Gastrocnemius medialis (tissue), 4 donors: ENCODE measurements at regions of chr15 and their contacts with region 1.

Region 1: GRCh38 chr15:74768771-74769342 is 13.0 kb upstream of the CSK start:
- DNase-seq: peak in 1 of 2 donors; percentile 48
- ATAC-seq: peak; percentile 66 to 71
- H3K4me3 ChIP-seq: peak overlapping the region in 1 of 4 donors; percentile 19
- H3K27ac ChIP-seq: no peak overlapping the region
- H3K4me1 ChIP-seq: no peaks in the 10 kb centered on the region
- H3K27me3 ChIP-seq: no peaks in the 10 kb centered on the region
- CTCF ChIP-seq: peak; percentile 82 to 91 (median 86)
- POLR2A ChIP-seq: no peak

Region 2: GRCh38 chr15:74373731-74374647 is 394.9 kb before region 1 on chr15:
- in situ Hi-C with region 1: loop called in 2 of 4 experiments (anchors 25 kb)
- intact Hi-C with region 1: loop called (anchors 2 kb)
- DNase-seq: peak; percentile 83 to 91
- ATAC-seq: peak; percentile 92 to 93
- H3K4me3 ChIP-seq: peak overlapping the region; percentile 63 to 90 (median 72)
- H3K27ac ChIP-seq: no peak overlapping the region
- H3K4me1 ChIP-seq: peaks cover 10 to 15% of the 10 kb centered on the region in 2 donors
- H3K27me3 ChIP-seq: no peaks in the 10 kb centered on the region
- CTCF ChIP-seq: peak; percentile 59 to 92 (median 87)
- POLR2A ChIP-seq: no peak

Region 3: DNA sequence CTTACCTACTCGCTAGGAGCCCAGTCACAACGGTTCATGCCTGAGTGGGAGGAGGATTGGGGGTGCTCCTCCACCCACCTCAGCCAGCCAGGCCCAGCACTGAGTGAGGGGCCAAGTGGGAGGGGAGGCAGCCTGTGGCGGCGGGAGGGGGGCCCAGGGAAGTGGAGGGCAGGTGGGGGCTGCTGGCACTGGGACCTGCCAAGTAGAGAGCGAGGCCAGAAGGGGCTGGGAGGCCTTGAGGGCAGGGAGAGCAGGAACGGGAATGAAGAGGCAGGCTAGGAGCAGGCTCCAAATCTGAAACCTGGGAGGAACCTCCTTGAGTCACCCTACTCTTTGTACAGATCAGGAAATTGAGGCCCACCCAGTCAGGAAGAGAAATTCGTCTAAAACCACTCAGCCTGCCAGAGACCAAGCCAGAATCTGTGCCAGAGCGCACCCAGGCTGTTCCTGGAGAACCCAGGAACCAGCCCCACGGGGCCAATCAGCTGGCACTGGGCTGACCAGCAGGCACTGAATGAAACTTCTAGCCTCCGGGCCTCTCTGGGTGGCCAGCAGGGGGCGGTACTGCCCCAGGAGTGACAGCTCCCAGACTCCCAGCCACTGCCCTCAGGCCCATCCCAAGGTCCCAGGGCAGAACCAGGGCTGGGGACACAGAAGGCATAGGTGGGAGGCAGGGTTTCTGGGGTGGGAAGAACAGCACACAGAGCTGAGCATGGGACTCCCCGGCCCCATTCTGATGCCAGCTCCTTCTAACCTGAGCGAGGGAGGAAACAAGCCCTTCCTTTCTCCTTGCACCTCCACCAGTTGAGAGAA is 386.6 kb before region 1 on chr15:
- in situ Hi-C with region 1: loop called in 2 of 4 experiments (anchors 25 kb)
- intact Hi-C with region 1: no loop called
- DNase-seq: peak; percentile 59 to 79
- ATAC-seq: peak; percentile 80 to 92
- H3K4me3 ChIP-seq: no peak overlapping the region
- H3K27ac ChIP-seq: no peak overlapping the region
- H3K4me1 ChIP-seq: peaks cover 12 to 13% of the 10 kb centered on the region in 2 donors
- H3K27me3 ChIP-seq: no peaks in the 10 kb centered on the region
- CTCF ChIP-seq: peak; percentile 88 to 96 (median 94)
- POLR2A ChIP-seq: no peak

Region 4: DNA sequence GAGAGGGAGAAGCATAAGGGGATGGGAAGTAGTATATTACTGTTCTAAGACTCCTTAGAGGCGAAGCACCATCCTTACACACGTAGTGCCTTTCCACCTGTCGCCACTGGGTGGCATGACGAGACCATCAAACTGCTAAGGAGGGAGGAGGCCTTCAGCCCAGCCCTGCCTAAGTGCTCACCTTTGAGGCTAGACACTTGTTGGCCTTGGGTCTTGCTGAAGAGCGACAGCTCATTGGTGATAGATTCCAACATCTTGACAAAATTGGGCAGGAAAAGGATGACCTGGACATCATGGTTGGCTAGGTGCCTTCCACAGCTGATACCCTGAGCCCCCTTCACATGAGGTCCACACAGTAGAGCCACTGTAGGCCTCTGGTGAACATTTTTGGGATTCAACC is 133.6 kb before region 1 on chr15:
- in situ Hi-C with region 1: loop called (anchors 5 to 10 kb)
- intact Hi-C with region 1: loop called (anchors 1 kb)
- DNase-seq: peak in 1 of 2 donors; percentile 51
- ATAC-seq: peak; percentile 64 to 73
- H3K4me3 ChIP-seq: no peak overlapping the region
- H3K27ac ChIP-seq: no peak overlapping the region
- H3K4me1 ChIP-seq: peaks cover 0 to 4% of the 10 kb centered on the region in 2 donors
- H3K27me3 ChIP-seq: no peaks in the 10 kb centered on the region
- CTCF ChIP-seq: peak; percentile 83 to 89 (median 85)
- POLR2A ChIP-seq: no peak

Region 5: DNA sequence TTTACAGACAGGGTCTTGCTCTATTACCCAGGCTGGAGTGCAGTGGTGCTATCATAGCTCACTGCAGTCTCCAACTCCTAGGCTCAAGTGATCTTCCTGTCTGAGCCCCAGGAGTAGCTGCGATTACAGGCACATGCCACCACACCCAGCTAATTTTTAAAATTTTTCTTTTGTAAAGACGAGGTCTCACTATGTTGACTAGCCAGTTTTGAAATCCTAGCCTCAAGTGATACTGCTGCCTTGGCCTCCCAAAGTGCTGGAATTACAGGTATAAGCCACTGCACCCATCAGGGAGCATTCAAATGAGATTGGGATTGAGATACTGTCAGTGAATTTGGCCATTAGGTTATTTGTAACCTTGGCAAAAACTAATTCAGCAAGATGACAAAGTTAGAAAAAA is 94.7 kb before region 1 on chr15:
- in situ Hi-C with region 1: no loop called
- intact Hi-C with region 1: no loop called
- DNase-seq: no peak
- ATAC-seq: no peak
- H3K4me3 ChIP-seq: no peak overlapping the region
- H3K27ac ChIP-seq: no peak overlapping the region
- H3K4me1 ChIP-seq: no peaks in the 10 kb centered on the region
- H3K27me3 ChIP-seq: no peaks in the 10 kb centered on the region
- CTCF ChIP-seq: no peak
- POLR2A ChIP-seq: no peak

Region 6: DNA sequence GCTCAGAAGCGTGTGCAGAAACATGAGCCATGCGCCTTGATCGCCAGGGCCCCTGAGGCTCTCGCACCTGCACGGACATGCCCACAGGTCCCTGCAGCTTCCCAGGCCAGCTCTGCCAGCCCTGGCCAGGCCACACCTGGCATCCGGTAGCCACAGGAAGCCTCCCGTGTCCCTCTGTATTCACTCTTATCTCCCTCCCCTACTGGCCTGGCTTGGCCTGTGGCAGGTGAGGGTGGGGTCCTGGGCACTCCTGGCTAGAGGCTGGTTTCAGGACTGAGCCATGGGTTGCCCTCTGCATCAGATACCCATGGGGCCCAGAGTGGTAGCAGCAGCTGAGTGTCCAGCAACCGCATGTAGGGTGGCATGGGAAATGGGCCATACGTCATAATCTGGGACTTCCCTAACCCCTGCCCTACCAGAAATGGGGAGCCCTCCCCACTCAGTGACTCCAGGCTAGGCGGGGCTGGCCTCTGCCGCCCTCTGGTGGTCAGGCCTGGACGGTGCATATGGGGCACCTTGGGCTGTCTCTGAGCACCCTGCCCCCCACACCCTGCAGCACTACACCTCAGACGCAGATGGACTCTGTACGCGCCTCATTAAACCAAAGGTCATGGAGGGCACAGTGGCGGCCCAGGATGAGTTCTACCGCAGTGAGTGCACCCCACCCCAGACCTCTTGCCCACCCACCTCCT is 31.1 kb after region 1 on chr15:
- in situ Hi-C with region 1: no loop called
- intact Hi-C with region 1: loop called (anchors 1 kb)
- DNase-seq: peak; percentile 52 to 71
- ATAC-seq: peak; percentile 69 to 85
- H3K4me3 ChIP-seq: no peak overlapping the region
- H3K27ac ChIP-seq: peak overlapping the region; percentile 71 to 84 (median 75)
- H3K4me1 ChIP-seq: peaks cover 23 to 24% of the 10 kb centered on the region in 2 donors
- H3K27me3 ChIP-seq: no peaks in the 10 kb centered on the region
- CTCF ChIP-seq: peak; percentile 92 to 99 (median 98)
- POLR2A ChIP-seq: no peak

Region 7: DNA sequence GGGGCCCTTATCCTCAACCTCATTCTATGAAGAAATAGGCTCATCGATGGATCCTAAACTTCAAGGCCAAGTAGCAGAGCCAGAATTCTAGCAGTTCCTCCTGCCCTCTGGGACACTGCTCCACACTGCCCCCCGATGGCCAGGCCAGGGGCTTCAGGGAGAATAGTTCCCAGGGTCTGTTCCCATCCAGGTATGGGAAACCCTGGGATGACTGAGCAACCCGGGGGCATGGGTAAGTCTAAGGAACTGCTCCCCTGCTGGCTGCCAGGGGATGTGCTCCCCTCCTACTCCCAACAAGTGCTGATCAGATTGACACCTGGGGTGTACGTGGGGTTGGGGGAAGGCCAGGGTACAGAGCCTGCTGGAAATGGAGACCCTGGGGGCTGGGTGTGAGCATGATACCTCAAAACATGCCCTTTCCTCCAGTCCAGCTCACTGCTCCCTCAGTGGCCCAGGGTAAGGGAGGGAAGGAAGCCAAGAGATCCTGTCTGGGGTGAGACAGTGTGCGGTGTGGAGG is 66.5 kb after region 1 on chr15:
- in situ Hi-C with region 1: no loop called
- intact Hi-C with region 1: loop called (anchors 2 kb)
- DNase-seq: peak in 1 of 2 donors; percentile 56
- ATAC-seq: peak; percentile 40 to 57
- H3K4me3 ChIP-seq: no peak overlapping the region
- H3K27ac ChIP-seq: no peak overlapping the region
- H3K4me1 ChIP-seq: peaks cover 16 to 19% of the 10 kb centered on the region in 2 donors
- H3K27me3 ChIP-seq: no peaks in the 10 kb centered on the region
- CTCF ChIP-seq: peak; percentile 61 to 80 (median 71)
- POLR2A ChIP-seq: no peak

Region 8: DNA sequence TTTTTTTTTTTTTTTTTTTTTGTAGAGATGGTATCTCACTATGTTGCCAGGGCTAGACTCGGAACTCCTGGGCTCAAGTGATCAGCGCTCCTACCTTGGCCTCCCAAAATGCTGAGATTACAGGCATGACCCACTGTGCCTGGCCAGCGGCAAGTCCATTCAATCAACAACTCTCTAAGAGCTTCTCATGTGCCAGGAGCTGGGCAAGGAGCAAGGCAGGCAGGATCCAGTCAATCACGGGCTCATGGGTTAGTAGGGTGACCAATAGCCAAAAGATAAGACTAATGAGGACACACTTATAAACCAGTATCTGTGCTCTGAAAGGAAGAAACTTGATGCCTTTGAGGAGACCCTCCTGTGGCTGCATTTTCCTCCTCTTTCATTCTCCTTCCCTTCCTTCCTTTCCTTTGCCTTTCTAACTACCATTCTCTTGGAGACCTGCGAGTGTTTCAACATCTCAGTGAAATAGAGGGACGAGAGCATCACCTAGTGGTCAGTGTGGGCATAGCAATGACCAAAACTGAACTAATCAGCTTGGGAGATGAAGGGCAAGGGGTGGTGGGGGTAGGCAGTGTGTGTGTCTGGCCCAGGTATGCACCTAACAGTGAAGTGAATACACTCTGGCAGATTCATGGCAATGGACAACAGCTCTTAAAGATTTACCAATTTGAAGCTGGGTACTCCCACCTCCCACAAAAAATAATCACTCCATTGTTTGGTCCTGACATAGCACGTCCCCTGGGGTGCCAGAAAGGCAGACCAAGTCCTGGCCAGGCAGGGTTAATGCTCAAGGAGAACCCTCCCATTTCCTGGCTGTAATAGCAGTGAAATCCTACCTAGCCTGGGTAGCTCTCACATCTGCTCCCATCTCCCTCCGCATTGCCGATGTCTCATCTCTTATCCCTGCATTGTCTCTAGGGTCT is 181.5 kb after region 1 on chr15:
- in situ Hi-C with region 1: loop called in 3 of 4 experiments (anchors 5 to 10 kb)
- intact Hi-C with region 1: loop called (anchors 1 kb)
- DNase-seq: peak; percentile 36 to 64
- ATAC-seq: peak; percentile 90 to 92
- H3K4me3 ChIP-seq: no peak overlapping the region
- H3K27ac ChIP-seq: no peak overlapping the region
- H3K4me1 ChIP-seq: no peaks in the 10 kb centered on the region
- H3K27me3 ChIP-seq: peaks cover 6 to 12% (median 7%) of the 10 kb centered on the region in 3 donors
- CTCF ChIP-seq: peak; percentile 95 to 99 (median 97)
- POLR2A ChIP-seq: no peak